ENCODE measurements at regions of chr7 and their contacts with region 1.

Region 1: DNA sequence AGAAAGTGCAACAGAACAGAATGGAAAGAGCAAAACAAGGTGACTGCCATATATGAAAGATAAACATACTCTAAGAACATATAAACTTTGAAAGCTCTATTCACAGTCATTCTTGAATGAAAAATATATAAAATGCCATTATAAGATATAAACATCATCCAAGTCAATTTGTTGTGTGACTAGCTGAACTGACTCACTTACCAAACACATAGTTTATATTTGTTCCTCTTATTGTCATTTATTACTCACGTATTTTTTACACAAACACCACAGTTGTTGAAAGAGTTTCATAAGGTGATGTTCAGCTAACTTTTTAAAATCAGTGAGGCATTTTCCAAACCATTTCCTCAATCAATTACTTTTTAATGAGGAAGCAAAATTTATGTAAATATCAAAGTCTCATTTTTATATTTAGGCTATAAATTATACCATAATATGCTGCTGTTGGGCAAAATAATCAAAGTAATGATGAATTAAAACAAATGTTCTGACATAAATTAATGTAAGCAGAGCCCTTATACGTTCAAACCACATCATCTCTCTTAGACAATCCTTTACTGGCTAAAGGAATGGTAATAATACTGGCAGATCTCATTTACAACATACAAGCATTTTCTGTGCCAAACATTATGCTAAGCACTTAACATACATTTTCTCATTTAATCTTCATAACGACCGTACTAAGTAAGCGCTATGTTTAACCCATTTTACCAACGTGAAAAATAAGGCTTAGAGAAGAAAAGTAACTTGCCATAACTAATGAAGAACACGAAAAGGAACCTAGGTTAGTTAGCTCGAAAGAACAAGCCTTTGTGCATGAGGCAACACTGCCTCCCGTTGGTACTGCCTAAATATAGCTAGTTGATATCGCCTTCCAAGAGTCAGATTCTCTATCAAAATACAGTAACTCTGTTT is 7.3 kb downstream of the LRRN3 start:
- DNase-seq: peak in 8 of 9 donors; percentile 42 to 77 (median 67)
- ATAC-seq: peak; percentile 93
- H3K4me3 ChIP-seq: no peak overlapping the region
- H3K4me3 Mint-ChIP-seq: peak overlapping the region; percentile 41 to 96 (median 82)
- H3K27ac ChIP-seq: peak overlapping the region; percentile 25
- H3K27ac Mint-ChIP-seq: peak overlapping the region; percentile 54 to 95 (median 84)
- H3K4me1 ChIP-seq: peaks cover 0 to 15% of the 10 kb centered on the region in 2 donors
- H3K4me1 Mint-ChIP-seq: peaks cover 15 to 81% (median 72%) of the 10 kb centered on the region in 7 donors
- H3K27me3 ChIP-seq: no peaks in the 10 kb centered on the region
- H3K27me3 Mint-ChIP-seq: no peaks in the 10 kb centered on the region

Region 2: GRCh38 chr7:110003827-110004226 is 1094.4 kb before region 1 on chr7:
- CTCF ChIA-PET with region 1: no interaction called
- POLR2A ChIA-PET with region 1: no interaction called
- intact Hi-C with region 1: loop called in 1 of 2 experiments (anchors 10 kb)
- DNase-seq: no peak
- ATAC-seq: no peak
- H3K4me3 ChIP-seq: no peak overlapping the region
- H3K4me3 Mint-ChIP-seq: no peak overlapping the region
- H3K27ac ChIP-seq: no peak overlapping the region
- H3K27ac Mint-ChIP-seq: no peak overlapping the region
- H3K4me1 ChIP-seq: no peaks in the 10 kb centered on the region
- H3K4me1 Mint-ChIP-seq: no peaks in the 10 kb centered on the region
- H3K27me3 ChIP-seq: no peaks in the 10 kb centered on the region
- H3K27me3 Mint-ChIP-seq: peaks cover 0 to 7% (median 0%) of the 10 kb centered on the region in 5 donors

Region 3: GRCh38 chr7:110442381-110442837 is 655.9 kb before region 1 on chr7:
- CTCF ChIA-PET with region 1: no interaction called
- POLR2A ChIA-PET with region 1: no interaction called
- intact Hi-C with region 1: loop called in 1 of 2 experiments (anchors 10 kb)
- DNase-seq: no peak
- ATAC-seq: no peak
- H3K4me3 ChIP-seq: no peak overlapping the region
- H3K4me3 Mint-ChIP-seq: no peak overlapping the region
- H3K27ac ChIP-seq: no peak overlapping the region
- H3K27ac Mint-ChIP-seq: no peak overlapping the region
- H3K4me1 ChIP-seq: no peaks in the 10 kb centered on the region
- H3K4me1 Mint-ChIP-seq: no peaks in the 10 kb centered on the region
- H3K27me3 ChIP-seq: no peaks in the 10 kb centered on the region
- H3K27me3 Mint-ChIP-seq: peaks cover 0 to 4% (median 0%) of the 10 kb centered on the region in 5 donors

Region 4: DNA sequence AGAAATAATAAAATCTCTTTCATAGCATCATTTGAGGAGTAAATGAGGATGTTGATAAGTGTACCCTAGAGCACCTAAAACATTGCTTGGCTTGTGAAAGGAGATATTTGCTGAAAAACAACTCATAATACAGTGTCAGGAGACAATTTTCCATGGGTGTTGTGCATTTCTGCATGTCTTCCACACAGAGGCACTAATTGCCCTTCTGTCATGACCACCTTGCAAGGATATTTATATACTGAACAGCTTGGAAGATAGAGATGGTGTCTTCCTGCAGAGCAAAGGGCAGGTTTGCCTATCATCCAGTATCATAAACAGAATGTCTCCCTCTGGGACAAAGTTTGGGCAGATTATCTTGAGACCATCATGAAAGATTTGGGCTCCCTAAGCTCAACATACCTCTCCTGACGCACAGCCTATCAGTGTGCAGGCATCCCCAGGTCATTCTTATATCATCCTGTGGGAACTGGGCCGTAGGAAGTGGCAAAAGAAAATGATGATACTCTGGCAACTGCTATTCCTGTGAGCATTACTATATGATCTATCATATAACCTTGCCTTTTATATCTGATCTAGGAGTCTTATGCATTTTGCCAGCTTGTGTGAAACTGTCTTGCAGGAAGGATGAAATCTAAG is 502.5 kb before region 1 on chr7:
- CTCF ChIA-PET with region 1: interaction called, 38 read pairs
- POLR2A ChIA-PET with region 1: interaction called, 8 read pairs
- intact Hi-C with region 1: loop called (anchors 1 kb)
- DNase-seq: peak in 5 of 9 donors; percentile 16 to 39 (median 21)
- ATAC-seq: no peak
- H3K4me3 ChIP-seq: no peak overlapping the region
- H3K4me3 Mint-ChIP-seq: no peak overlapping the region
- H3K27ac ChIP-seq: no peak overlapping the region
- H3K27ac Mint-ChIP-seq: no peak overlapping the region
- H3K4me1 ChIP-seq: no peaks in the 10 kb centered on the region
- H3K4me1 Mint-ChIP-seq: peaks cover 0 to 15% (median 0%) of the 10 kb centered on the region in 7 donors
- H3K27me3 ChIP-seq: no peaks in the 10 kb centered on the region
- H3K27me3 Mint-ChIP-seq: peaks cover 0 to 11% (median 0%) of the 10 kb centered on the region in 5 donors

Region 5: DNA sequence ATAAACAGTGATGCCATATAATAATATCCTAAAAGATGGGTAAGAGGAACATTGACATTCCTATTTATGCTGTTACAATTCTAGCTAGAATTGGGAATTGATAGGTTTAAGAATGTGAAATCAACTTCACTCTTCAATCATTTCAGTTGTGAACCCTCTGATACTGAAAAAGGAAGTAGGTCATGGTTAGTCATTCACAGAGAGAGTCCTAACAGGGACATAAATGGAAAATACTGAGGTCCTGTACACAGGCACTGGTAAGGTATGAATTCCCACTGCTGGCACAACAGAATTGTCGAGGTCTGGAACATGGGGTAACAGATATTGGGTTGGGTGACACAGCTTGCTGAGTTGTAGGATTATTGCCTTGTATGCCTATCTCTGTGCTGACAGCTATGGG is 296.8 kb before region 1 on chr7:
- CTCF ChIA-PET with region 1: no interaction called
- POLR2A ChIA-PET with region 1: no interaction called
- intact Hi-C with region 1: no loop called
- DNase-seq: no peak
- ATAC-seq: no peak
- H3K4me3 ChIP-seq: no peak overlapping the region
- H3K4me3 Mint-ChIP-seq: no peak overlapping the region
- H3K27ac ChIP-seq: no peak overlapping the region
- H3K27ac Mint-ChIP-seq: no peak overlapping the region
- H3K4me1 ChIP-seq: no peaks in the 10 kb centered on the region
- H3K4me1 Mint-ChIP-seq: peaks cover 0 to 7% (median 0%) of the 10 kb centered on the region in 7 donors
- H3K27me3 ChIP-seq: no peaks in the 10 kb centered on the region
- H3K27me3 Mint-ChIP-seq: no peaks in the 10 kb centered on the region

Region 6: GRCh38 chr7:111045449-111045848 is 52.8 kb before region 1 on chr7:
- CTCF ChIA-PET with region 1: no interaction called
- POLR2A ChIA-PET with region 1: no interaction called
- intact Hi-C with region 1: no loop called
- DNase-seq: no peak
- ATAC-seq: no peak
- H3K4me3 ChIP-seq: no peak overlapping the region
- H3K4me3 Mint-ChIP-seq: no peak overlapping the region
- H3K27ac ChIP-seq: no peak overlapping the region
- H3K27ac Mint-ChIP-seq: peak overlapping the region in 1 of 9 donors; percentile 4
- H3K4me1 ChIP-seq: peaks cover 0 to 6% of the 10 kb centered on the region in 2 donors
- H3K4me1 Mint-ChIP-seq: peaks cover 4 to 34% (median 14%) of the 10 kb centered on the region in 7 donors
- H3K27me3 ChIP-seq: no peaks in the 10 kb centered on the region
- H3K27me3 Mint-ChIP-seq: no peaks in the 10 kb centered on the region

Region 7: DNA sequence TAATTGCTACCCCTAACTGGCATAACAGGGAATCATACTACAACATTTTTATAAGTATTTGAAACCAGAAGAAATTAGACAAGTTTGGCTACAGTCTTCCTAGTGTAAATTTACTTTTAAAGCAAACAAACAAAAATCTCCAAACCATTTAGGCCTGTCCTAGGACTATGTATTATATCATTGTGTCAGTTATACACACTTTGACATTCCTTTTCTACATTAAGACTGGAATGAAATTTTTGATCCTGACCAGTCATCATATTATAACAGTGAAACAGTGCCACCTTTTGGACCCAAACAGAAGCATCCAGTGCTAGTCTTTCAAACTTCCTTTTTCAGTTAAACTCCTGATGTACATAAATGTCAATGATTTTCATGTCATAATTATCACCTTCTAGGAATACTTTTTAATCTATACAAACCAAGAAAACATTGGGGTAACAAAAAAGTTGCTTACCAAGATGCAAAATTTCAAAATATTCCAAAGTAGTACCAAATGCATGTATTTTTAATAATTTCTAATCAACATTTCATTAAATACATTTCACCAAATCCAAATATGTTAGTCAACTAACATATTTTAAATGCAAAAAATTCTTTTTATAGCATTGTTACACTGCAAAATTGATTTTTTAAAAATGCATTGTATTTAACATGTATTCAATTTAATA is 388.3 kb after region 1 on chr7:
- CTCF ChIA-PET with region 1: no interaction called
- POLR2A ChIA-PET with region 1: no interaction called
- intact Hi-C with region 1: loop called (anchors 2 to 5 kb)
- DNase-seq: peak in 5 of 9 donors; percentile 12 to 33 (median 29)
- ATAC-seq: no peak
- H3K4me3 ChIP-seq: no peak overlapping the region
- H3K4me3 Mint-ChIP-seq: no peak overlapping the region
- H3K27ac ChIP-seq: no peak overlapping the region
- H3K27ac Mint-ChIP-seq: no peak overlapping the region
- H3K4me1 ChIP-seq: no peaks in the 10 kb centered on the region
- H3K4me1 Mint-ChIP-seq: peaks cover 0 to 3% (median 0%) of the 10 kb centered on the region in 7 donors
- H3K27me3 ChIP-seq: no peaks in the 10 kb centered on the region
- H3K27me3 Mint-ChIP-seq: no peaks in the 10 kb centered on the region

Region 8: GRCh38 chr7:112206238-112207044 is 1108.2 kb after region 1 on chr7 and contains the starts of genes DOCK4 and ZNF277:
- CTCF ChIA-PET with region 1: no interaction called
- POLR2A ChIA-PET with region 1: no interaction called
- intact Hi-C with region 1: loop called in 1 of 2 experiments (anchors 10 kb)
- DNase-seq: peak; percentile 97 to 100 (median 99)
- ATAC-seq: peak; percentile 93
- H3K4me3 ChIP-seq: peak within 1 kb of the TSS; percentile 94
- H3K4me3 Mint-ChIP-seq: peak within 1 kb of the TSS; percentile 93 to 99 (median 96)
- H3K27ac ChIP-seq: peak within 1 kb of the TSS; percentile 71
- H3K27ac Mint-ChIP-seq: peak within 1 kb of the TSS; percentile 60 to 95 (median 85)
- H3K4me1 ChIP-seq: peaks cover 14 to 22% of the 10 kb centered on the region in 2 donors
- H3K4me1 Mint-ChIP-seq: peaks cover 25 to 57% (median 39%) of the 10 kb centered on the region in 7 donors
- H3K27me3 ChIP-seq: peaks cover 15% of the 10 kb centered on the region in 2 donors
- H3K27me3 Mint-ChIP-seq: peaks cover 25 to 36% (median 29%) of the 10 kb centered on the region in 5 donors
- total RNA-seq, gene DOCK4: 0.19 to 3.1 (median 2.4) TPM
- total RNA-seq, gene ZNF277: 19.5 to 38.8 (median 25.9) TPM